Activated CD4-positive, alpha-beta memory T cell treated with anti-CD3 and anti-CD28 coated beads, Interleukin-2, amount 10 ng/mL, durations not matched to agents 7 days and 5 days (primary cell): ENCODE measurements at regions of chr15 and their contacts with region 1.

Region 1: GRCh38 chr15:78709263-78709882 is 68.4 kb upstream of the CHRNB4 start:
- DNase-seq: peak; percentile 72
- H3K4me3 Mint-ChIP-seq: no peak overlapping the region
- H3K27ac Mint-ChIP-seq: no peak overlapping the region
- H3K4me1 Mint-ChIP-seq: peaks cover 19% of the 10 kb centered on the region
- H3K27me3 Mint-ChIP-seq: peaks cover 32% of the 10 kb centered on the region

Region 2: DNA sequence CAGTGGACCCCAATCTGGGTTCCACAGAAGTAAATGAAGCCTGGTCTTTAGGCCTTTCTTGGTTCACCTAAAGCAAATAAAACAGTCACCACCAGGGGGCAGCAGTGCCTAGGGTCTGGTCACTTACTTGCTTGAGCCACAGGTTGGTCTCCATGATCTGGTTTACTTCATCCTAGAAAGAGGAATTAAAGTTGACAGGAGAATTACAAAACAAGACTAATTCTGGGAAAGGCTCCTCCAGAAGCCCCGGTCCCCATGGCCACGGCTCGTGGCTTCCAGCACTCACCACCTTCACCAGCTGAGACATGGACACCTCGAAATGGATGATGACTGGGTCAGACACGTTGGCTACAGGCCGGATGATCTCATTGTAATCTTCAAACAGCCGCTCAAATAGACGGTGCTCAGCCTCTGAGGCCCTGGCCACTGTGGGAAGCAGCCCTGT is 90.9 kb before region 1 on chr15:
- CTCF ChIA-PET with region 1: interaction called, 27 read pairs
- POLR2A ChIA-PET with region 1: no interaction called
- DNase-seq: peak; percentile 79
- H3K4me3 Mint-ChIP-seq: no peak overlapping the region
- H3K27ac Mint-ChIP-seq: no peak overlapping the region
- H3K4me1 Mint-ChIP-seq: peaks cover 2% of the 10 kb centered on the region
- H3K27me3 Mint-ChIP-seq: peaks cover 43% of the 10 kb centered on the region

Region 3: GRCh38 chr15:78638658-78639314 is 70.6 kb before region 1 on chr15:
- CTCF ChIA-PET with region 1: interaction called, 27 read pairs
- POLR2A ChIA-PET with region 1: no interaction called
- DNase-seq: peak; percentile 39
- H3K4me3 Mint-ChIP-seq: no peak overlapping the region
- H3K27ac Mint-ChIP-seq: no peak overlapping the region
- H3K4me1 Mint-ChIP-seq: peaks cover 13% of the 10 kb centered on the region
- H3K27me3 Mint-ChIP-seq: peaks cover 24% of the 10 kb centered on the region

Region 4: DNA sequence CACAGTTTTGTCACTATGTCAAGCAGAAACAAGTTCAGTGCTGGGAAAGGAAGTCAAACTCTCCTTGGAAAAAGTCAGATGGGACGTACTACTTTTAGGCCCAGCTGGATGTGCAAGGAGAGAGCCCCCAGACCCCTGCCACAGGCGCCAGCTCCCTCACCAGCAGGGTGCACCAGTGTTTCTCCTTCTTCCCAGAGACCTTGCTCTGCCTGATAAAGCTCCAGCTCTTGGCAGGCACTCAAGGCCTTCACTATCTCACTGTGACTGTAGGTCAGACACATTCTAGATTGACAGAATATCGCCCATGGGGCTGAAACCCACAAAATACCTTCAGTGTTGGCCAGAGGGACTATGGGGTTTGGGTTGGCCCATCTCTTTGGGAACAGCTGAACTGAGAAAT is 13.5 kb before region 1 on chr15:
- CTCF ChIA-PET with region 1: no interaction called
- POLR2A ChIA-PET with region 1: no interaction called
- DNase-seq: no peak
- H3K4me3 Mint-ChIP-seq: no peak overlapping the region
- H3K27ac Mint-ChIP-seq: no peak overlapping the region
- H3K4me1 Mint-ChIP-seq: peaks cover 1% of the 10 kb centered on the region
- H3K27me3 Mint-ChIP-seq: peaks cover 27% of the 10 kb centered on the region